ENCODE measurements at regions of chr11 and their contacts with region 1.

Region 1: DNA sequence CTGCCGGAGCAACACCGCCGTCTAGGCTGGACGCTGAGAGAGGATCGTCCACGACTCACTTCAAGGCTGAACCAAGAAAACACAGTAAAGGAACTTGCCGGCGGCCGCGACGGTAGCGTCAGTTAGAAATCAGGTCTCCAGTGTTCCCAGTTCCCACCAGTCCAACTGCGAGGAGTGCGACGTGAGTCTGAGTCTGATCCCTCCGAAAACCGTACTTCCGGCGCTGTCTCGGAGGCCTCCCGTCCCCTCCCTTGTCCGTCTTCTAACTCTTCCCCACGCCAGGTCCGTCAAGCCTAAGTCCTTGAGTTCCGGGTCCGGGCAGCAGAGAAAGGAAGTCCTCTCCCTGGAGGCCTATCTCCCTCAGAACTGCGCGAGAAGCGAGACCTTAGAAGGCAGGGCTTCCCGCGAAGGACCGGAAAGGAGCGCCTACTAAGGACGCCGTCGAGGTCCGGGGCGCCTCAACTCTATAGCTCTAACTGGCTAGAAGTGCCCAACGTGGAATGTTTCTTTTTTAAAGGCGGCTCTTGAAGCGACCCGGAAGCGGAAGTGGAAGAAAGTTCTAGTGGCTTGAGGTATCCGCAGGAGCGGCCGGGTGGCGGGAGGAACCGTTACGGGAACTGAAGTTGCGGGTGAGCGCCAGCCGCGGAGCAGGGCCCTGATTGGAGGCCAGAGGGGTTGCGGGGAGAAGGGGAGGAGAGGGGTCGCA is at the starts of genes BANF1 and EIF1AD:
- DNase-seq: peak; percentile 75 to 96 (median 94)
- ATAC-seq: peak; percentile 92
- H3K4me3 ChIP-seq: peak within 1 kb of the TSS; percentile 100
- H3K4me3 Mint-ChIP-seq: peak within 1 kb of the TSS; percentile 97 to 100 (median 99)
- H3K27ac ChIP-seq: peak within 1 kb of the TSS; percentile 92
- H3K27ac Mint-ChIP-seq: peak within 1 kb of the TSS; percentile 96 to 100 (median 98)
- H3K4me1 ChIP-seq: peaks cover 8 to 14% of the 10 kb centered on the region in 2 donors
- H3K4me1 Mint-ChIP-seq: peaks cover 21 to 58% (median 52%) of the 10 kb centered on the region in 7 donors
- H3K27me3 ChIP-seq: no peaks in the 10 kb centered on the region
- H3K27me3 Mint-ChIP-seq: no peaks in the 10 kb centered on the region
- total RNA-seq, gene BANF1: 54.5 to 234 (median 99.4) TPM
- total RNA-seq, gene EIF1AD: 49.9 to 114 (median 66.7) TPM

Region 2: GRCh38 chr11:65711785-65712632 is 290.1 kb before region 1 on chr11 and contains the start of gene KAT5:
- CTCF ChIA-PET with region 1: no interaction called
- POLR2A ChIA-PET with region 1: interaction called, 6 read pairs
- intact Hi-C with region 1: loop called (anchors 1 kb)
- DNase-seq: peak; percentile 95 to 99 (median 98)
- ATAC-seq: peak; percentile 87
- H3K4me3 ChIP-seq: peak within 1 kb of the TSS; percentile 100
- H3K4me3 Mint-ChIP-seq: peak within 1 kb of the TSS; percentile 91 to 99 (median 95)
- H3K27ac ChIP-seq: peak within 1 kb of the TSS; percentile 95
- H3K27ac Mint-ChIP-seq: peak within 1 kb of the TSS; percentile 93 to 100 (median 99)
- H3K4me1 ChIP-seq: peaks cover 5 to 9% of the 10 kb centered on the region in 2 donors
- H3K4me1 Mint-ChIP-seq: peaks cover 12 to 41% (median 25%) of the 10 kb centered on the region in 7 donors
- H3K27me3 ChIP-seq: no peaks in the 10 kb centered on the region
- H3K27me3 Mint-ChIP-seq: peaks cover 0 to 5% (median 0%) of the 10 kb centered on the region in 5 donors
- total RNA-seq, gene KAT5: 68.6 to 133 (median 113) TPM

Region 3: DNA sequence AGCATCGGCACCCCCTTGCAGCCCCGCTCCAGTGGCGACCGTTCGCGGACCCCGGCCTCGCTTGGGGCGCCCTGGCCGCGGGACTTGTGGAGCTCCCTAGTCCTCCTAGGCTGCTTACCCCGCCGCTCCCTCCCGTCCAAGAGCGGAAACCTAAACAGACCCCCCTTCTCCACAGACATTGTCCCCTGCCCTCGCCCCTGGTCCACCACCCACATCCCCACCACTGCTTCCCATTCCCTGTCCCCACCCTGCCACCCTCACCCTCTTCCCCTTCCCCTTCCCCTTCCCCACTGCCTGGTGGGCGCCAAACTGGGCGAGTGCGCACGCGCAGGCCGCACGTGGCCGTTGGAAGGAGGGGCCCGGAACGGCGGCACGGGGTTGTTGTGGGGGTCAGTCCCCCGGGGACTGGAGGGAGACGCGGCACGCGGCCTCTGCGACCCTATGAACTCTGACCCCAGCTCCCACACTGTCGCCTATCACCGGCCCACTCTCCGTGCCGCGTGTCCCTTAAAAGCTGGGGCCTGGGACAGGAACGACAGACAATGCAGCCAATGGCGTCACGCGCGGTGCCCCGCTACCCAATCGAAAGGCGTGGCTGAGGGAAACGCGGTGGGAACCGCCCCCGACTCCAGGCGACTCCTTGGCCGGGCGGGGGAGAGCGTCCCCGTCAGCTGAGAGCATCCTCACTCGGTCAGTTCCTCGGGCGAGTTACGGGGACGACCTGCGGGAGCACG is 168.6 kb before region 1 on chr11 and contains the start of gene SNX32:
- CTCF ChIA-PET with region 1: no interaction called
- POLR2A ChIA-PET with region 1: no interaction called
- intact Hi-C with region 1: loop called in 1 of 2 experiments (anchors 1 kb)
- DNase-seq: peak; percentile 88 to 94 (median 93)
- ATAC-seq: peak; percentile 100
- H3K4me3 ChIP-seq: peak within 1 kb of the TSS; percentile 91
- H3K4me3 Mint-ChIP-seq: no peak within 1 kb of the TSS
- H3K27ac ChIP-seq: peak within 1 kb of the TSS; percentile 78
- H3K27ac Mint-ChIP-seq: peak within 1 kb of the TSS in 1 of 9 donors; percentile 91
- H3K4me1 ChIP-seq: peaks cover 10 to 13% of the 10 kb centered on the region in 2 donors
- H3K4me1 Mint-ChIP-seq: peaks cover 7 to 17% (median 7%) of the 10 kb centered on the region in 7 donors
- H3K27me3 ChIP-seq: no peaks in the 10 kb centered on the region
- H3K27me3 Mint-ChIP-seq: peaks cover 0 to 21% (median 0%) of the 10 kb centered on the region in 5 donors
- total RNA-seq, gene SNX32: 0.81 to 2.0 (median 1.1) TPM

Region 4: DNA sequence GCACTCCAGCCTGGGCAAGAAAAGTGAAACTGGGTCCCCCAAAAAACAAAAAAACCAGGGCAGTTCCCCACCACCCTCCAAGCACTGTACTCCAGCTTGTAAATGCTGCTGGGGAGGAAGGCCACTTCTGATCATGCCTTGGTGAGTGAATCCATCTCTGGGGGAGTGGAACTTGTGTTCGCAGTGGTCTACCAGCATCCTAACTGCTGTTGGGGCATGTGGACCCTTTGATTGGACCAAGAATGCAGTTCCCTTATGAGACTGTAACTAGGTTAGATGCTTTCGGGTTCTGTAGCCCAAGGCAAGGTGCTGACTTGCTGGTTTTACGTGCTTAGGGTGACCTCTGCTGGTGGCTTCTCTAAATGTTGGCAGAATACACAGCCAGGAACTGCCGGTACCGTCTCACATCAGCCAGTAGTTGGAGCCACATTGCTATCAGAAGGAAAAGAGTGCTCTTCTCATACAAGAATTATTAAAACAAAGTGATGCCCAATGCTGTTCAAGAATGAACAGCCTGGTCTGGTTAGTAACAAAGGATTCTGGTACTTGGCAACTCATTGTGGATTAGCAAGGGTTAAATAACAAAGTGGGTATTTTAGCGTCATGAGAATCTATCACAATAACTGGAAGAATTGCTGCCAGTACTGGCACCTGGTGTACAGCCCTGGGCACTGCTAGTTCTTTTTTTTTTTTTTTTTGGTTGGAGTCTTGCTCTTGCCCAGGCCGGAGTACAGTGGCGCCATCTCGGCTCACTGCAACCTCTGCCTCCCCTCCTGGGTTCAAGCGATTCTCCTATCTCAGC is 13.1 kb before region 1 on chr11:
- CTCF ChIA-PET with region 1: no interaction called
- POLR2A ChIA-PET with region 1: interaction called, 8 read pairs
- intact Hi-C with region 1: loop called in 1 of 2 experiments (anchors 1 kb)
- DNase-seq: peak; percentile 66 to 95 (median 91)
- ATAC-seq: peak; percentile 100
- H3K4me3 ChIP-seq: no peak overlapping the region
- H3K4me3 Mint-ChIP-seq: no peak overlapping the region
- H3K27ac ChIP-seq: no peak overlapping the region
- H3K27ac Mint-ChIP-seq: peak overlapping the region; percentile 0 to 90 (median 74)
- H3K4me1 ChIP-seq: no peaks in the 10 kb centered on the region
- H3K4me1 Mint-ChIP-seq: peaks cover 5 to 7% (median 6%) of the 10 kb centered on the region in 7 donors
- H3K27me3 ChIP-seq: no peaks in the 10 kb centered on the region
- H3K27me3 Mint-ChIP-seq: no peaks in the 10 kb centered on the region

Region 5: DNA sequence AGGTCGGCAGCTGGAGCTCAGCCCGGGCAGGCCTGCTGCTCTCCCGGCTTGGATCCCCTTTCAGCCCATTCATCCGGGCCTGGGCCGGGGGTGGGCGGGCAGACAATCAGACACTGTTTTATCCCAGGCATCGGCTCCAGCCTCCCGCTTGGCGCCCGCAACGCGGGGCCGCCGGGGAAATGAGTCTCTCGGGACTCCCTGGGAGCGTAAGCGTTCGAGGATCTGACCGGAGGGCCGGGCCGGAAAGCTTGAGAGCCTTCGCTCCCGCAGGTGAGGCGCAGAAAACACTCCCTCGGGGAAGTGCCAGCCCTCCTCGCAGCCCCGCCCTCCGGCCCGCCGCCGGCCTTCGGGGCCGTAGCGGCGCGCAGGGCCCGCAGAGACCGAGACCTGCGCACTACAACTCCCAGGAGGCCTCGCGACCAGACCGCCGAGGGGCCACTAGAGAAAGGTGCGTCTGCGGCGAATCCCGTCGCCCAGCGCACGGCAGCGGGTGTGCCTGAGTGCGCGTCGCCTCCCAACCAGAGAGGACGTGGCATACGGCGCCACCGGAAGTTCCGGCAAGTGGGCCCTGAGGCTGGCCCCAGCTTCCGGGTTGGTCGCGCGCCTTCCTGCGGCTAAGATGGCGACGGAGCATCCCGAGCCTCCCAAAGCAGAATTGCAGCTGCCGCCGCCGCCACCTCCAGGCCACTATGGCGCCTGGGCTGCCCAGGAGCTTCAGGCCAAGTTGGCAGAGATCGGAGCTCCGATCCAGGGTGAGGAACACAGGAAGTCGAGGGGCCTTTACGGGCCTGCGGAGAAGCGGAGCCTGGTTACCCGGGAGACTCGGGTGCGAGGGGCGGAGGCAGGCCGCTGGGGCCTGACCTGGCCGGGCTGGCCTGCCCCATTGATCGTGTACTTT is 49.9 kb after region 1 on chr11 and contains the start of gene SF3B2:
- CTCF ChIA-PET with region 1: no interaction called
- POLR2A ChIA-PET with region 1: interaction called, 14 read pairs
- intact Hi-C with region 1: loop called (anchors 1 kb)
- DNase-seq: peak; percentile 81 to 94 (median 93)
- ATAC-seq: peak; percentile 99
- H3K4me3 ChIP-seq: peak within 1 kb of the TSS; percentile 88
- H3K4me3 Mint-ChIP-seq: peak within 1 kb of the TSS; percentile 95 to 100 (median 98)
- H3K27ac ChIP-seq: peak within 1 kb of the TSS; percentile 93
- H3K27ac Mint-ChIP-seq: peak within 1 kb of the TSS; percentile 95 to 99 (median 98)
- H3K4me1 ChIP-seq: peaks cover 14 to 18% of the 10 kb centered on the region in 2 donors
- H3K4me1 Mint-ChIP-seq: peaks cover 17 to 44% (median 38%) of the 10 kb centered on the region in 7 donors
- H3K27me3 ChIP-seq: no peaks in the 10 kb centered on the region
- H3K27me3 Mint-ChIP-seq: peaks cover 0 to 9% (median 0%) of the 10 kb centered on the region in 5 donors
- total RNA-seq, gene SF3B2: 163 to 248 (median 206) TPM

Region 6: GRCh38 chr11:66288671-66289547 is 286.8 kb after region 1 on chr11 and contains the start of gene YIF1A:
- CTCF ChIA-PET with region 1: no interaction called
- POLR2A ChIA-PET with region 1: no interaction called
- intact Hi-C with region 1: loop called in 1 of 2 experiments (anchors 1 kb)
- DNase-seq: peak; percentile 92 to 99 (median 99)
- ATAC-seq: peak; percentile 96
- H3K4me3 ChIP-seq: peak within 1 kb of the TSS; percentile 99
- H3K4me3 Mint-ChIP-seq: peak within 1 kb of the TSS; percentile 86 to 96 (median 90)
- H3K27ac ChIP-seq: peak within 1 kb of the TSS; percentile 76
- H3K27ac Mint-ChIP-seq: peak within 1 kb of the TSS; percentile 74 to 97 (median 92)
- H3K4me1 ChIP-seq: peaks cover 18 to 19% of the 10 kb centered on the region in 2 donors
- H3K4me1 Mint-ChIP-seq: peaks cover 17 to 46% (median 37%) of the 10 kb centered on the region in 7 donors
- H3K27me3 ChIP-seq: peaks cover 0 to 7% of the 10 kb centered on the region in 2 donors
- H3K27me3 Mint-ChIP-seq: peaks cover 13 to 35% (median 13%) of the 10 kb centered on the region in 5 donors
- total RNA-seq, gene YIF1A: 25.0 to 66.2 (median 33.3) TPM

Measured in naive thymus-derived CD4-positive, alpha-beta T cell (primary cell).